Activated T-helper 2 cell treated with anti-CD3 and anti-CD28 coated beads, Interferon-gamma antibody, Interleukin-2, Interleukin-4, amounts not matched to agents 10 μg/mL and 5 μg/mL and 100 μg/mL, durations not matched to agents 14 hours and 24 hours and 36 hours (primary cell): ENCODE measurements at regions of chr19 and their contacts with region 1.

Region 1: DNA sequence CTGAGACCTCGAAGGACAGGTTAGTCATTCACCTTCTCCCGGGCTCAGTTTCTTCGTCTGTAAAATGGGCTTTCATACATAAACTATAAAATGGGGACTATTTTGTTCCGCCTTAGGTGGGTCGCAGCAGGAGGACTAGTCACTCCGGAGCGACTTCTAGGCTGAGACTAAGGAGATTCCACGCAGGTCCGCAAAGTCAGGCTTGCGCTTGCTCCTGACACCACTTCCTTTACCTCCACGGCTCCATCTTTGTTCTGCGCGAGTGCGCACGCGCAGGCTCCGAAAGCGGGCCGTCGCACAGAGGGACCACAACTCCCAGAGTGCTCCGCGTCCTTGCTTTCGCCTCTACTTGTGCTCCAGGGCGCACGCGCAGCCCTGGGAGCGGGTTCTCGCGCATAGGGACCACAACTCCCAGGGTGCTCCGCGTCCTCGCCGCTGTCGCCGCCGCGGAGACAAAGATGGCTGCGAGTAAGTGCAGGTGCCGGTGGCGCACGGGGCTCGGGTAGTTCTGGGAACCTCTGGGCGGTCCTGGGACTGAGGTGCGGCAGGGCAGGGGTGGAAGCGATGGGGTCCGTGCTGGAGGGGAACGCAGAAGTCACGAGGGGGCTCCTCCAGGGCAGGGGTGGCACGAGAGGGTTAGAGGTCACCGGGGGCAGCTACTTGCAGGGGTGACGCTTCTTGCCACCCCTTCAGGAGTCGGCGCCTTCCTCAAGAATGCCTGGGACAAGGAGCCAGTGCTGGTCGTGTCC is at the start of gene NDUFA3:
- DNase-seq: peak; percentile 98
- H3K4me3 Mint-ChIP-seq: peak within 1 kb of the TSS; percentile 91
- H3K27ac Mint-ChIP-seq: peak within 1 kb of the TSS; percentile 79
- H3K4me1 Mint-ChIP-seq: peaks cover 8% of the 10 kb centered on the region
- H3K27me3 Mint-ChIP-seq: peaks cover 3% of the 10 kb centered on the region
- total RNA-seq, gene NDUFA3: 105 and 115 TPM in 2 replicates

Region 2: GRCh38 chr19:54014920-54015560 is 87.6 kb before region 1 on chr19:
- intact Hi-C with region 1: no loop called
- DNase-seq: no peak
- H3K4me3 Mint-ChIP-seq: no peak overlapping the region
- H3K27ac Mint-ChIP-seq: no peak overlapping the region
- H3K4me1 Mint-ChIP-seq: peaks cover 6% of the 10 kb centered on the region
- H3K27me3 Mint-ChIP-seq: peaks cover 7% of the 10 kb centered on the region

Region 3: DNA sequence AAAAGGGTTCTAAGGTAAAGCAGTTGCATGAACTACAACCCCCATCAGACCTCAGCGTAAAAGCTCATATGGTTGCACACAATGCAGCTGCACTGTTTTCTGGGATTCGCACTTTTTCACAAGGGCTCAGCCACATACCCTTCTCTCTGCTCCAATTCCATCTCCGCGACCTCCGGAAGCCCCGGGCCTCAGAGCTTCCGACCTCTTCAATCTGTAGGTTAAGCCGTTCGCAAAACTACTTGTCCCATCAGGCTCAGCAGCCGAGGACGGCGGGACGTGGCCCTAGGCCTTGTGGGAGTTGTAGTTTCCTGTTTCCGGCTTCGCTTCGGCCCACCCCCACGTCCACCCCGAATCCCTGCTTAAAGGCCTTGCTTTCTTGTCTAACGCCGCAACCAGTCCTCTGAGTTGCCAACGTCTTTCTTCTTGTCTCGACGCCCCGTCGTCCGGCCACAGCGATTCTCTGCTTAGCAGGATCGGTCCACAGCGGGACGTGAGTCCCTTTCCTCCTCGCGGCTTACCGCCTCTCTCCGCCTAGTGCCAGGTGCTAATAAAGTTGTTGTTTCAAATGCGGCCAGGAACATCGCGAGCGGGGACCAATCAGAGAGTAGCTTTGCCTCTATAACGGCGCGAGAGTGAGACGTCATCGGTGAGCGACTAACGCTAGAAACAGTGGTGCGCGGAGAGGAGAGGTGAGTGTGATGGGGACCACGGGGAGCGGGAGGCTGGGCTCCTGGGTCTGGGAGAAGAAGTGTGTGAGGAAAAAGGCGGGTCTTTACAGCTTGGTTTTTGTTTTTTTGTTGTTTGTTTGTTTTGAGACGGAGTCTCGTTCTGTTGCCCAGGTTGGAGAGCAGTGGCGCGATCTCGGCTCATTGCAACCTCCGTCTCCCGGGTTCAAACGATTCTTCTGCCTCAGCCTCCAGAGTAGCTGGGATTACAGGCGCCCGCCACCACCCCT is 12.8 kb after region 1 on chr19 and contains the starts of genes PRPF31 and TFPT:
- intact Hi-C with region 1: loop called (anchors 1 kb)
- DNase-seq: peak; percentile 94
- H3K4me3 Mint-ChIP-seq: peak within 1 kb of the TSS; percentile 97
- H3K27ac Mint-ChIP-seq: peak within 1 kb of the TSS; percentile 92
- H3K4me1 Mint-ChIP-seq: peaks cover 21% of the 10 kb centered on the region
- H3K27me3 Mint-ChIP-seq: no peaks in the 10 kb centered on the region
- total RNA-seq, gene PRPF31: 90.6 and 94.2 TPM in 2 replicates
- total RNA-seq, gene TFPT: 29.3 TPM in 2 replicates